ENCODE measurements at regions of chr17 and their contacts with region 1.

Region 1: DNA sequence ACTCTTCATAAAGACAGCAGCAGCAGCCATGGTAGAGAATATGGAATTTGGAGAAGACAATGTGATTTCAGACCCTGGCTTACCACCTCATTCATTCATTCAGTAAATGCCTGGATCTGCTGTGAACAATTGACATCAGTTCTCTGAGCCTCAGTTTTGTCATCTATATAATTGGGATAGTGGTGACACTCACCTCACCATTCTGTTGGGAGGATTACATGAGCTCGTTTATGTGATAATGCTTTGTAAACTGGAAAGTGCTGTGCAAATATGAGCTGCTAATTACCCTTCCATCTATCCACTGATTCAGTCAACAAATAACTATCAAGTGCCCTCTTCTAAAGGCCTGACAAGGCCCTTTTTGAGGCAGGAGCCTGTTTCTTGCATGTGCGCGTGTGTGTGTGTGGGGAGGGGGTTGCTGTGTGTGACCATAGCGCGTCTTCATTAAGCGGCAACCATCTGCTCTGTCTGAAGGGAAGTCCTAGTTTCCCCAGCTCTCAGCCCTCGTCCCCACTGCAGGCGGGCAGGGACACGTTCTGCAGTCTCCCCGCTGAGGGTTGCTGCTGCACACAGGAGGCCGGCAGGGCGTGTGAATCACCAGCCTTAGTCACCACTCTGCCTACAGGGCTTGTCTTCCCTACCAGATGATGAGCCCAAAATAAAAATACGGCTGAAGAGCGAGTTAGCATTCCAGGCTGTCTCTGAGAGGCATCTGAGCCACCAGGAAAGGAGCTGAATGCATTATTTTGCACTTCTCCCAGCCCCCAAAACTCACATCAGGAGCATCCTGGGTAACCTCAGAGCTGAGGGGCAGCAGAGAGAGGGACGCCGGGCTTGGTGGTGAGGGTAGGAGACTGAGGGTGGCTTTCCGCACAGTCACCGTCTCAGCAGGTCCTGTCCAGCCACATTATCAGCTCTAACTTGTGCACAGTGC is 19.9 kb downstream of the ARL4D start:
- DNase-seq: peak; percentile 74
- H3K4me3 ChIP-seq: peak overlapping the region; percentile 20; the same call in 1 of the 2 replicates
- CTCF ChIP-seq: peak; percentile 19

Region 2: GRCh38 chr17:43226393-43226792 is 192.3 kb before region 1 on chr17:
- CTCF ChIA-PET with region 1: no interaction called
- POLR2A ChIA-PET with region 1: no interaction called
- DNase-seq: no peak
- H3K4me3 ChIP-seq: no peak overlapping the region
- CTCF ChIP-seq: no peak

Region 3: DNA sequence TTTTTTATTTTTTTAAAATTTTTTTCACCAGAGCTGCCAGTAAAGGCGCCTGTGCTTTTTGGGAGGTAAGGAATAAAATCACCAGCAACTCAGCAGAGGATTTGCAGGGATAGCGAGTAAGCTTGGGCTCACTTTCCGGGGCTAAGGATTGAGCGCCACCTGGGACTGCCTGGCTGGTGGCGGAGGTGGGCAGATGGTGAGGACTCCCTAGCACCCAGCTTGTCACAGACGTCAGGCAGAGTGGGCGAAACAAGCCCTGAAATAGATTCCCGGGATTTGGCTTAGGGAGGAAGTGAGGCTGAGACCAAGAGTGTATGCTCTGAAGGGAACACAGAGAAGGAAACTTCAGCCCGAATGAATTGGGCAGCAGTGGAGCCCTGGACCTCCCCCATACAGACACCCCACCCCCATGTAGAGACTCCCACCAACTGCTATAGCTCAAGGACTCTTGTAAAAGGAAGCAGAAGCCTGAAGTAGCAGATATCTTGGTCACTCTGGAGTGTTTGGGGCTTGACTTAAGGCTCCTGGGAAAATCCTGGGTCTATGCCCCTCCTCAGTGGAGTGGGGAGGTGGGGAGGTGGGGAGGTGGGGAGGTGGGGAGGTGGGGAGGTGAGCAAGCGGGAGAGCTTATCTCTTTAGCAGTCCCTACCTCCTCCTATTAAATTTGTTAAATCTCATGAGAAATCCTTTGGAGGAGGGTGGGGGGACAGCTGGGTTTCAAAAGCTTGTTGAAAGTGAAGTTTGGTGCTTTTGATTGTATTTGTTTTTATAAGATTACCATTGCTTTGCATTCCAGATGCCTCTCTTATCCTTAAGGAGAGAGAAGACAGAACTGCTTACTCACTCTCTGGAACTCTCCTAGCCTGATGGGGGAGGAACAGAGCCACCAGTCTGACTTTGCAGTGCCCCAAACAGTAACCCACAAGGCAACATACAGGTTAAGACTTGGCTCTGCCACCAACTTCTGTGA is 11.7 kb before region 1 on chr17:
- CTCF ChIA-PET with region 1: interaction called, 4 read pairs
- POLR2A ChIA-PET with region 1: interaction called, 33 read pairs
- DNase-seq: no peak
- H3K4me3 ChIP-seq: no peak overlapping the region
- CTCF ChIP-seq: no peak

Measured in AG04449 (cell line).